Kidney (tissue), 22 donors: ENCODE measurements at regions of chr1 and their contacts with region 1.

Region 1: GRCh38 chr1:240732390-240732789 is 120.4 kb upstream of the GREM2 start:
- DNase-seq: peak in 2 of 5 donors; percentile 69 to 81
- H3K4me3 ChIP-seq: no peak overlapping the region
- H3K27ac ChIP-seq: no peak overlapping the region
- H3K4me1 ChIP-seq: no peaks in the 10 kb centered on the region
- H3K27me3 ChIP-seq: no peaks in the 10 kb centered on the region
- CTCF ChIP-seq: peak; percentile 56

Region 2: GRCh38 chr1:240586006-240586405 is 146.4 kb before region 1 on chr1:
- intact Hi-C with region 1: no loop called
- DNase-seq: no peak
- H3K4me3 ChIP-seq: no peak overlapping the region
- H3K27ac ChIP-seq: no peak overlapping the region
- H3K4me1 ChIP-seq: no peaks in the 10 kb centered on the region
- H3K27me3 ChIP-seq: no peaks in the 10 kb centered on the region
- CTCF ChIP-seq: no peak

Region 3: DNA sequence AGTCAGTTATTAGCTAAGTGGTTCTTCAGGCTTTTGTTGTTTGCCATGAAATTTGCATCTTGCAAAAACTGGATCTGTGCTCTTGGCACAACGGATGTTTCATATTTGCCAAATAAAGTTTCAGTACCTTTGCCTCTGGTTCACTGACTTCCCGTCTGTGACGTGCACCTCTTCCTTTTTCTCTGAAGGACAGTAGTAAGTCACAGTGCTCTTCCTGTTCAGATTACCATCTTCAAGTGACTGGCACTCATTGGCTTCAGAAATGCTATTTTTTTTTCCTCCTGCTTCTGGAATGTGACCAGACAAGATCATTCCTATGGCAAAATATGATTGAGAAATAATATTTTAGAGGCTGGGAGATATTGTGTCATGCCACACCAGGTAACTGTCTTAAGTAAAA is 44.6 kb before region 1 on chr1:
- intact Hi-C with region 1: no loop called
- DNase-seq: no peak
- H3K4me3 ChIP-seq: no peak overlapping the region
- H3K27ac ChIP-seq: no peak overlapping the region
- H3K4me1 ChIP-seq: no peaks in the 10 kb centered on the region
- H3K27me3 ChIP-seq: no peaks in the 10 kb centered on the region
- CTCF ChIP-seq: no peak

Region 4: DNA sequence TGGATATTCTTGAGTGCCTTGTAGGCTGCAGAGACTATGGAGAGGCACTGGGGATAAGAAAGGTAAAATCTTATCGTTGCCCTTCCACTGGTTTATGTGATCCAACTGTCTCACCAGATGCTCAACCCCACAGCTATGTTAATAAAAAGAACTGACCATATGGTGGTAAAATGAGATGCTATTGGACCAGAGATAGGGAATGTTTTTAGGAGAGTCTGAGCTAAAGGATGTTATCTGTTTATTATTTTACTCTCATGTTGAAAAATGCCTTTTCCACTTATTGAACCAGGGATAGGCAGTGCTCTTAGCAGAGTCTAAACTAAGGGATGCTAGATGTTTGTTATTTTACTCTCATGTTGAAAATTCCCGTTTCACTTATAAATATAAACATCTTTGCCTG is 52.4 kb after region 1 on chr1:
- intact Hi-C with region 1: no loop called
- DNase-seq: no peak
- H3K4me3 ChIP-seq: no peak overlapping the region
- H3K27ac ChIP-seq: peak overlapping the region in 1 of 2 donors; percentile 48
- H3K4me1 ChIP-seq: no peaks in the 10 kb centered on the region
- H3K27me3 ChIP-seq: no peaks in the 10 kb centered on the region
- CTCF ChIP-seq: no peak

Region 5: GRCh38 chr1:240946926-240947325 is 214.5 kb after region 1 on chr1:
- intact Hi-C with region 1: loop called (anchors 10 kb)
- DNase-seq: peak in 2 of 5 donors; percentile 14 to 33
- H3K4me3 ChIP-seq: no peak overlapping the region
- H3K27ac ChIP-seq: no peak overlapping the region
- H3K4me1 ChIP-seq: no peaks in the 10 kb centered on the region
- H3K27me3 ChIP-seq: no peaks in the 10 kb centered on the region
- CTCF ChIP-seq: peak; percentile 44